ENCODE measurements at regions of chr16 and their contacts with region 1.

Region 1: GRCh38 chr16:23423496-23424049 is 29.4 kb downstream of the COG7 start:
- DNase-seq: peak; percentile 91
- H3K27ac ChIP-seq: peak overlapping the region; percentile 100
- CTCF ChIP-seq: no peak

Region 2: DNA sequence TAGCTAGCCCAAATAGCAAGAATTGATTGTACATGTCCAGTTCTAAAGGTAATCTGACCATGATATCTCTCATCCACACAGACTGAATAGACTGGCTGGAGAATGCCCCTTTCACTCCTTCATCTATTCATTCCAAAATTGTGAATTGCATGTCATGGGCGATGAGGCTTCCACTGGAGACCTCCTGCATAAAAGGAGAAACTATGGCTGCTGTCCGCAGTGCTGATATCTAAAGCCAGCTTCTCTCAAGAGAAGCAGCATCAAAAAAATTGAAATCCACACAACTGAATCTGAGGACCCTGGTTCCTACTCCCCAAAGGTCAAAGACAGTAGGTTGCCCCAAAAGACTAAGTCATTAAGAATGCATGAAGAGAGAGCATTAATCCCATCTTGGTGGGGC is 249.0 kb before region 1 on chr16:
- CTCF ChIA-PET with region 1: no interaction called
- POLR2A ChIA-PET with region 1: interaction called, 12 read pairs
- DNase-seq: peak; percentile 13
- H3K27ac ChIP-seq: no peak overlapping the region
- CTCF ChIP-seq: no peak

Region 3: DNA sequence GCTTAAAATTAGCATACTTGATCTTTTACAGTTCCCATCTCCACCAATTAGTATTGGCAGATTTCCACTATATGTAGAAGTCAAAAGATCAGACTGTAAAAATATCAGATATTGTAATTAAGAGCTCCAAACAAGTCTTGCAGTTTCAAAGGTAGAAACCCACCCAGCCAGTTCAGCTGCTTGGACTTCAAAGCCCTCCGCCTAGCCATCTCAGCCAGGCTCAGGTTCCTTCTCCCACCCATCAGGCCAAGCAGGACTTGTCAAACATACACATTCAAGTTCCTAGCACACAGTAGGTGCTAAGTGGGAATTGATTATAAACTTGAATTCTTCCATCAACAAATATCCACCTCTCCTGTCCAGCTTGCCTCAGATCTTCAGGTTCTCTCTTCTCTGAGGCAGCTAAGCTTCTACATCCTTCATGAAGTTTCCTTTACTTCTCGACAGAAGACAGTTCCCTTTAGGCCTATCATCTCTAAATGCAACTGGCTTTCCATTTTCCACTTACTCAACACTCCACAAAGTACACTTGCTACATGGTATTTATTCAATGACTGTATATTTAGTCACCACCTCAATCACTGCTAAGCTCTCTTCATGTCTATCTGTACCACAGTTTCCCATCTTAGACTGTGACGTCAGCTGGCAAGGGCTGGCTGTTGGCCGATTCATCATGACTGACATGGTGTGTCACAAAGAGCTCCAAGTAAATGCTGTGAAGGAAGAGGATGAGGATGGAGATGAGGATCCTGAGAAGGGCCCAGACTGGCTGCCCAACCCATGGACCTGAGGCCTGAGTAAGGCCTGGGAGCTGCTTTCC is 42.7 kb after region 1 on chr16:
- CTCF ChIA-PET with region 1: no interaction called
- POLR2A ChIA-PET with region 1: no interaction called
- DNase-seq: peak; percentile 68
- H3K27ac ChIP-seq: peak overlapping the region; percentile 38
- CTCF ChIP-seq: no peak

Region 4: GRCh38 chr16:24367186-24367710 is 943.7 kb after region 1 on chr16:
- CTCF ChIA-PET with region 1: interaction called, 11 read pairs
- POLR2A ChIA-PET with region 1: no interaction called
- DNase-seq: no peak
- H3K27ac ChIP-seq: no peak overlapping the region
- CTCF ChIP-seq: no peak